AG04450 (cell line): ENCODE measurements at regions of chr6 and their contacts with region 1.

Region 1: DNA sequence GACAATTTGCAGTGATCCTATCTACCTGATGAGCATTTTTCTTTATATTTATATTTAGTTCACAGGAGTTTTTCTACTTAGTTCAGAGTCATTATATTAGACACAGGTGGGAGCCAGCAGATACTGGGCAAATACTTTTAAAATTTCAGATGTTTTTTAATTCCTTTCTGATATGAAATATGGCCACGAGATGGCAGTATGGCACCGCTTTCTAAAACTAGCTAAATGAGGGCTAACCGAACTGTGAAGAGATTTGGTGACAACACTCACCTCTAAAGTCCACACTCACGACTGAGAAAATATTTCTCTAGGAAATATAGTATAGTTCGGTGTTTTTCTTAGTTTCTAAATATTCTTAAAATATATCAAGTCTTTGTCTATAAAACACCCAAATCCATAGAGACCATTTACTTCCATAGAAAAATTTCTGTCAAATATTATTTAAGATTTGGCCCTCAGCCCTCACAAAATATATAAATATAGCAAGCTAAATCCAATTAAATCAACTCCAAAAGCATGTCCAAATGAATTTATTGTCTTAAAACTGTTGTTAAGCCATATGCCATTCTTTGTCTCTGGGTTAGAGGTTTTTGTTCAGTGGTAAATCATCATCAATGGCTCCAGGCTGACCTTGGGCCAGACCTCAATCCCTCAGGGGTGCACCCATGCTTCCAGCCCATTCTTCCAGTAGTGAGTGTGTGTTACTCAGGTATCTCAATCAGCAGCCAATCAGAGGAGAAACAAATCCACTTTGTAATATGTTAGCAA is 63.6 kb downstream of the HUS1B start:
- DNase-seq: no peak
- H3K4me3 ChIP-seq: no peak overlapping the region
- H3K27ac ChIP-seq: no peak overlapping the region
- H3K27me3 ChIP-seq: no peaks in the 10 kb centered on the region
- CTCF ChIP-seq: peak; percentile 64

Region 2: DNA sequence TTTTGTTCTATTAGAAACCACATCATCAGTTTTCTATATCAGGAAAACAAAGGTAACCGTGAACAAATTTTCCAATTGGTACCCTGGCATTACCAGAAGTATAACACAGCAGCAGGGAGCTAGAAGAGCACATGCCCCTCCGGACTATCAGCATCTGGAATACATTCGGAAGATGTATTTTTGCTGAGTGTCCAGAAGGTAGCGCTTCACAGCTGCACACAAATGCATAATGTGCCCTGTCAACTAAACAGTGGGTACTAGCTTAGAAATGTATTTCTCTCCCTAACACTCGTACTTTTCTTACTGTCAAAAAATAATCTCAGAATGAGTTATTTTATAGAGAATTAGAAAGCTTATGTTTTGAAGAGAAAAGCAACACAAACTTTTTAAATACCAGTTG is 14.0 kb before region 1 on chr6:
- CTCF ChIA-PET with region 1: interaction called, 57 read pairs
- POLR2A ChIA-PET with region 1: no interaction called
- DNase-seq: no peak
- H3K4me3 ChIP-seq: no peak overlapping the region
- H3K27ac ChIP-seq: no peak overlapping the region
- H3K27me3 ChIP-seq: no peaks in the 10 kb centered on the region
- CTCF ChIP-seq: peak; percentile 46

Region 3: GRCh38 chr6:683742-684440 is 90.6 kb after region 1 on chr6:
- CTCF ChIA-PET with region 1: interaction called, 14 read pairs
- POLR2A ChIA-PET with region 1: no interaction called
- DNase-seq: peak; percentile 79
- H3K4me3 ChIP-seq: peak overlapping the region; percentile 54
- H3K27ac ChIP-seq: peak overlapping the region; percentile 60
- H3K27me3 ChIP-seq: no peaks in the 10 kb centered on the region
- CTCF ChIP-seq: no peak

Region 4: GRCh38 chr6:797479-798077 is 204.3 kb after region 1 on chr6:
- CTCF ChIA-PET with region 1: interaction called, 23 read pairs
- POLR2A ChIA-PET with region 1: no interaction called
- DNase-seq: peak; percentile 21
- H3K4me3 ChIP-seq: no peak overlapping the region
- H3K27ac ChIP-seq: no peak overlapping the region
- H3K27me3 ChIP-seq: peaks cover 21% of the 10 kb centered on the region
- CTCF ChIP-seq: peak; percentile 80

Region 5: GRCh38 chr6:1436334-1437306 is 843.3 kb after region 1 on chr6:
- CTCF ChIA-PET with region 1: interaction called, 56 read pairs
- POLR2A ChIA-PET with region 1: no interaction called
- DNase-seq: peak; percentile 36
- H3K4me3 ChIP-seq: no peak overlapping the region
- H3K27ac ChIP-seq: no peak overlapping the region
- H3K27me3 ChIP-seq: peaks cover 11% of the 10 kb centered on the region
- CTCF ChIP-seq: peak; percentile 78